H1 (cell line): ENCODE measurements at regions of chr13 and their contacts with region 1.

Region 1: GRCh38 chr13:36282818-36283445 is 14.7 kb downstream of the CCDC169 start:
- DNase-seq: no peak
- H3K4me3 ChIP-seq: no peak overlapping the region
- H3K27ac ChIP-seq: no peak overlapping the region
- H3K4me1 ChIP-seq: no peaks in the 10 kb centered on the region
- H3K27me3 ChIP-seq: no peaks in the 10 kb centered on the region
- CTCF ChIP-seq: peak in 2 of 3 experiments; percentile 55 to 62; a peak in 2 of 4 replicates
- EP300 ChIP-seq: no peak
- POLR2A ChIP-seq: no peak
- RAD21 ChIP-seq: peak; percentile 86 to 91

Region 2: GRCh38 chr13:36259361-36260137 is 23.4 kb before region 1 on chr13:
- CTCF ChIA-PET with region 1: no interaction called
- POLR2A ChIA-PET with region 1: no interaction called
- DNase-seq: no peak
- H3K4me3 ChIP-seq: no peak overlapping the region
- H3K27ac ChIP-seq: no peak overlapping the region
- H3K4me1 ChIP-seq: peaks cover 0 to 4% (median 0%) of the 10 kb centered on the region in 4 experiments; a peak in 2 of 7 replicates
- H3K27me3 ChIP-seq: no peaks in the 10 kb centered on the region
- CTCF ChIP-seq: no peak
- EP300 ChIP-seq: no peak
- POLR2A ChIP-seq: no peak
- RAD21 ChIP-seq: no peak

Region 3: GRCh38 chr13:36297366-36298338 is 14.7 kb after region 1 on chr13 and contains the start of gene CCDC169:
- CTCF ChIA-PET with region 1: interaction called, 7 read pairs
- POLR2A ChIA-PET with region 1: interaction called, 15 read pairs
- DNase-seq: peak; percentile 83 to 94
- H3K4me3 ChIP-seq: peak within 1 kb of the TSS; percentile 66 to 82 (median 70)
- H3K27ac ChIP-seq: peak within 1 kb of the TSS; percentile 93
- H3K4me1 ChIP-seq: peaks cover 0 to 15% (median 12%) of the 10 kb centered on the region in 4 experiments; a peak in 3 of 7 replicates
- H3K27me3 ChIP-seq: no peaks in the 10 kb centered on the region
- CTCF ChIP-seq: no peak
- EP300 ChIP-seq: peak in 1 of 2 experiments; percentile 44; a peak in 1 of 3 replicates
- POLR2A ChIP-seq: peak; percentile 80 to 96
- RAD21 ChIP-seq: no peak; a peak in 1 of 4 replicates
- total RNA-seq, gene CCDC169: 43.3 and 44.0 TPM in 2 replicates

Region 4: GRCh38 chr13:36395280-36395679 is 112.3 kb after region 1 on chr13:
- CTCF ChIA-PET with region 1: interaction called, 13 read pairs
- POLR2A ChIA-PET with region 1: no interaction called
- DNase-seq: no peak
- H3K4me3 ChIP-seq: no peak overlapping the region
- H3K27ac ChIP-seq: no peak overlapping the region
- H3K4me1 ChIP-seq: no peaks in the 10 kb centered on the region
- H3K27me3 ChIP-seq: no peaks in the 10 kb centered on the region
- CTCF ChIP-seq: peak in 2 of 3 experiments; percentile 21 to 28; a peak in 2 of 4 replicates
- EP300 ChIP-seq: no peak
- POLR2A ChIP-seq: no peak
- RAD21 ChIP-seq: peak; percentile 47 to 54

Region 5: GRCh38 chr13:36453516-36453915 is 170.6 kb after region 1 on chr13:
- CTCF ChIA-PET with region 1: interaction called, 11 read pairs
- POLR2A ChIA-PET with region 1: no interaction called
- DNase-seq: no peak
- H3K4me3 ChIP-seq: no peak overlapping the region
- H3K27ac ChIP-seq: no peak overlapping the region
- H3K4me1 ChIP-seq: peaks cover 2 to 9% (median 7%) of the 10 kb centered on the region in 4 experiments; a peak in 4 of 7 replicates
- H3K27me3 ChIP-seq: no peaks in the 10 kb centered on the region
- CTCF ChIP-seq: peak in 2 of 3 experiments; percentile 56 to 57; a peak in 3 of 4 replicates
- EP300 ChIP-seq: no peak
- POLR2A ChIP-seq: no peak
- RAD21 ChIP-seq: peak; percentile 85 to 89